ENCODE measurements at regions of chr3 and their contacts with region 1.

Region 1: DNA sequence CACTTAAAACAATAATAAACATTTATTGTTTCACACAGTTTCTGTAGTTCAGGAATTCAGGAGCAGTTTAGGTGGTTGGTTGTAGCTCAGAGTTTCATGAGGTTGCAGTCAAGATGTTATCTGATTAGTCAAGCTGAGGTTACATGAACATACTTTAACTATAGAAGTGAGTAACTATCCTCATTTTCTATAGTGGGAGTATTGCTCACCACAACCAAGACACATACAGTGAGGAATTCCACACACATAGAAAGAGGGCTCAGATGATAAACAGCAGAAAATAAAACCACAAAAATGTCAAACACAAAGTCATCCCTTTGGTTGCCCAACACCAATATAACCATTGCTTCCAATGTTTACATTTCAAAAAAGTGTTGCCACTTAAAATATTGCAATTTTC is 13.6 kb downstream of the SCN11A start:
- DNase-seq: no peak
- H3K4me3 ChIP-seq: no peak overlapping the region
- H3K27ac ChIP-seq: no peak overlapping the region
- H3K4me1 ChIP-seq: no peaks in the 10 kb centered on the region
- H3K27me3 ChIP-seq: no peaks in the 10 kb centered on the region
- CTCF ChIP-seq: no peak

Region 2: DNA sequence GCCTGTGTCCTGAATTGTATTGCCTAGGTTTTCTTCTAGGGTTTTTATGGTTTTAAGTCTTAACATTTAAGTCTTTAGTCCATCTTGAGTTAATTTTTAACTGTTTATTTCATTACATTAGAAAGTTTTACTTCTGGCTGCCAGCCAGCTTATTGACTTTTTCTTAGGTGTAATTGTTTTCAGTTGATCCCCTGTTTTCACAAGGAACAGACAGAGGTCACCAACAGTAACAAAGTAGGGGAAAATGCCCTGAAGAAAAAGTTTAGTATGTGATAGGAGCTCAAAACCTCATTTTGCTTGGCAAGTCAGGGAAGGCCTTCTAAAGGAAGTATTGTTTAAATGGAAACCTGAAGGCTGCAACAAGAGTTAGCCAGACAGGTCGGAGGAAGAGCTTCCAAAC is 24.0 kb after region 1 on chr3:
- CTCF ChIA-PET with region 1: no interaction called
- POLR2A ChIA-PET with region 1: interaction called, 15 read pairs
- intact Hi-C with region 1: no loop called
- DNase-seq: no peak
- H3K4me3 ChIP-seq: no peak overlapping the region
- H3K27ac ChIP-seq: no peak overlapping the region
- H3K4me1 ChIP-seq: no peaks in the 10 kb centered on the region
- H3K27me3 ChIP-seq: no peaks in the 10 kb centered on the region
- CTCF ChIP-seq: no peak

Measured in A673 (cell line).